Activated CD8-positive, alpha-beta memory T cell treated with anti-CD3 and anti-CD28 coated beads, Interleukin-2, amount 10 ng/mL, durations not matched to agents 7 days and 5 days (primary cell): ENCODE measurements at regions of chr3 and their contacts with region 1.

Region 1: DNA sequence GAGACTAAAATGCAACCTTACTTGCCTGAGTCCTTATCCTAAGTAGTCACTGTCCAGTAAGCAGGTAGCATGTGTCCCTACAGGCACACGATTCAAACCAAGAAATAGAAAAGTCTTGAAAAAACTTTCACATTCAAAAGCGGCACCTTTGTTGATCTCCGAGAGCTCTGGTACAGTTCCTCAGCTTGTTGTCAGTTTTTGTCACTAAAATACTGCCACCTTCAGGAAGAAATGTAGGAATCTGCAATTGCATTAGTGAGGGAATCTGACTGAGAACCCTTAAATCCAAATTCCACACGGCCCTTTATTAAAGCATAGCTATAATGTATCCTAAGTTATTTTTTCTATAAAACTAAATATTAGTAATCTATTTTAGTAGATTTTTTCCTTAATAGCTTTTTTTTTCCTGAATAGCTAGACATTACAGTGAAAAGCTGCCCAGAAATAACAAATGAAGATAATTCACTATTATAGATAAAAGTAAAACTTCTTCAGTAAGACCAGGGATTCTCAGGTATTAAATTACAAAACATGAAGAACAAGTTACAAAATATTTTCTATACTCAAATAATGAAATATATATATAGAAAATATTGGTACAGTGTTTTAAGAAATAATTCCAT is 44.0 kb downstream of the CCDC54 start:
- DNase-seq: no peak
- ATAC-seq: peak; percentile 83
- H3K4me3 Mint-ChIP-seq: no peak overlapping the region
- H3K27ac Mint-ChIP-seq: no peak overlapping the region
- H3K4me1 Mint-ChIP-seq: peaks cover 3% of the 10 kb centered on the region
- H3K27me3 Mint-ChIP-seq: peaks cover 28% of the 10 kb centered on the region

Region 2: GRCh38 chr3:107271787-107272387 is 149.4 kb before region 1 on chr3:
- CTCF ChIA-PET with region 1: interaction called, 27 read pairs
- DNase-seq: no peak
- ATAC-seq: peak; percentile 61
- H3K4me3 Mint-ChIP-seq: no peak overlapping the region
- H3K27ac Mint-ChIP-seq: no peak overlapping the region
- H3K4me1 Mint-ChIP-seq: no peaks in the 10 kb centered on the region
- H3K27me3 Mint-ChIP-seq: peaks cover 10% of the 10 kb centered on the region

Region 3: DNA sequence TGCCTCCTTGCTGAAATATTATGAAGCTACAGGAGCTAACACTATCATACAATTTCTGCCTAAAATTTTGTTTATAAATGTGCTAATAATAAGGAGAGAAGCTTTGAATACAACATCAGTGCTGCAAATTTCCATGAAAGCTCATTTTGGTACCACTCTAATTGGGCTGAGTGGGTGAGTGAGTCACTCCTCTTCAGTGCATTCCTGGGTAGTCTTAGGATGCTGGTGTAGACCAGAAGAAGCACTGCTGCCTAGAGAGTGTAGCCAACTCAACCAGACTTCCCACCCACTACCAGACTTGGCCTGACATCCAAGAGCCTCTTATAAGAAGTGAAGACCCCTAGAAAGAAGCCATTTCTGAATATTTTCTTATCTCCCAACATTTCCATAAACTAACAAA is 76.6 kb before region 1 on chr3:
- CTCF ChIA-PET with region 1: no interaction called
- DNase-seq: no peak
- ATAC-seq: no peak
- H3K4me3 Mint-ChIP-seq: no peak overlapping the region
- H3K27ac Mint-ChIP-seq: no peak overlapping the region
- H3K4me1 Mint-ChIP-seq: peaks cover 2% of the 10 kb centered on the region
- H3K27me3 Mint-ChIP-seq: peaks cover 2% of the 10 kb centered on the region